GM13977 (cell line): ENCODE measurements at regions of chr13 and their contacts with region 1.

Region 1: DNA sequence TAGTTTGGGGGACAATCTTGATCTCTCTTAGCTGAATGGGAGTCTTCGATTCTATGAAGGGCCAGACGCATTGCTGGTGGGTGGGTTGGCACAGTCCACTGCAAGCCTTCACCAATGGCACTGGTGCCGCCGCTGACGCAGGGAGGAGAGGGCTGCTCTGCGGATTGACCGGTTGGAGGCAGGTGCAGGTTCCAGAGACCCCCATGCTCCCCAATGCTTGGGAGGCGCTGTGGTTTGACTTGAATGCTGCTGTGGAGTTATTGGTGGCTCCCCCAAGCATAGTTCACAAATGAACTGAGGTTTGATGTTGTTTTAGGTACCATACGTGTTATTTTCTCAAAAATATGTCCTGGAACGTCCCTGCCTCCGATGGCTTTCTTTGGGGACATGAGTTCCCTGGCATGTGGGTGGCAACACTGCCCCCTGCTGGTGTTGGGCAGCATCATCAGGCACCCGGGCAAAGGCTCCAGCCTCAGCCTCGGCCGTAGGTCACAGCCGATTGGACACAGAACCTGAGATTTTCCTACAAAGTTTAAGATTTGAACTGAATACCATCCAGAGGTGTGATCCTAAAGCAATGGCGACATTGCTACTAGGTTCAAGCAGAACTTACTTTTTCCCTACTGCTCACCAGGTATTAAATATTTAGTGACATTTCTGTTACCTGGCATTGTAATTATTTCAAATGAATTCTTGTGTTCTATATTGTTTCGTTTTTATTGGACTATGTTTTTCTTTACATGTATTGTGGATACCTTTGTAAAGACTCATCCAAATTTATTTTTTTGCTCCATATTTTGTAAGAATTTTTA is 95.5 kb downstream of the ANKRD10 start:
- DNase-seq: peak; percentile 89
- CTCF ChIP-seq: peak; percentile 96

Region 2: GRCh38 chr13:110455941-110456340 is 363.5 kb before region 1 on chr13:
- in situ Hi-C with region 1: loop called (anchors 25 kb)
- DNase-seq: peak; percentile 95
- CTCF ChIP-seq: peak; percentile 97

Region 3: GRCh38 chr13:110480141-110480540 is 339.3 kb before region 1 on chr13:
- in situ Hi-C with region 1: no loop called
- DNase-seq: no peak
- CTCF ChIP-seq: no peak

Region 4: GRCh38 chr13:110615322-110616102 is 203.9 kb before region 1 on chr13 and contains the start of gene NAXD:
- in situ Hi-C with region 1: loop called (anchors 25 kb)
- DNase-seq: peak; percentile 99
- CTCF ChIP-seq: no peak

Region 5: GRCh38 chr13:111153279-111153976 is 334.0 kb after region 1 on chr13:
- in situ Hi-C with region 1: no loop called
- DNase-seq: peak; percentile 97
- CTCF ChIP-seq: peak; percentile 31

Region 6: GRCh38 chr13:111165241-111166010 is 346.0 kb after region 1 on chr13:
- in situ Hi-C with region 1: no loop called
- DNase-seq: no peak
- CTCF ChIP-seq: no peak